ENCODE measurements at regions of chr19 and their contacts with region 1.

Region 1: DNA sequence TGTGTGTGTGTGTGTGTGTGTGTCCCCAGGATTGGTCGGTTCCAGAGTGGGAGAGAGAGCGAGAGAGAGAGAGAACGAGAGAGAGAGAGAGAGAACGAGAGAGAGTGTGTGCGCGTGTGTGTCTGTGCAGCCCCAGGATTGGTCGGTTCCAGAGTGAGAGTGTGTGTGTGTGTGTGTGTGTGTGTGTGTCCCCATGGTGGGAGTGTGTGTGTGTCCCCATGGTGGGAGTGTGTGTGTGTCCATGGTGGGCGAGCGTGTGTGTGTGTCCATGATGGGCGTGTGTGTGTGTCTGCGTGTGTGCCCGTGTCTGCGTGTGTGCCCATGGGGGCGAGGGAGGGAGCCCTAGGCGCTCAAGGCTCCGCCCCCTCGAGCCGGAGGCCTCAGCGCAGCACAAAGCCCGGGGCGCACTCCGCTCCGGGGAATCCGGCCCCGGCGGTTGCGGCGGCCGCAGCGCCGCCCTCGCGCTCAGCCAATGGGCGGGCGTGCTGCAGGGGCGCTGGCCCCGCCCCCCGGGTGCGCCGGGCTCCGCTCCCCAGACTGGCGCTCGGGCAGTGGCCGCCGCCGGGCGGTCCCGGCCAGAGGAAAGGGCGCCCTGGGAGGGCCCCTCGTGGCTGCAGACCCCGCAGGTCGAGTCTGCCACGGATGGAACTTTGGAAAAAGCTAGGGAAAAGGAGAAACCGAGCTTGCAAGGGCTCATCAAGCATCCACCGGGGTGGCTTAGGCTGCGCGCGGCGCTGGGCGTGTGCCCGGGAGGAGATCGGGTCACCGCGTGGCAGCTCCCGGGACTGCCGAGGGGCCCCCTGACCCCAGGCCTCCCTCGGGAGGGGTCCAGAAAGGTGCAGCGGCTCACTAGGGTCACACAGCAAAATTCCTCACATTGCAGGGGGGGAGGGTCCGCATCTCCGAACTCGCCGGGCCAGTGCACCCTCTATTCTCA is 96.2 kb downstream of the INSR start:
- DNase-seq: peak; percentile 91 to 95 (median 95)
- ATAC-seq: peak; percentile 90
- H3K4me3 ChIP-seq: peak overlapping the region; percentile 51
- H3K4me1 ChIP-seq: peaks cover 30% of the 10 kb centered on the region
- CTCF ChIP-seq: no peak

Region 2: DNA sequence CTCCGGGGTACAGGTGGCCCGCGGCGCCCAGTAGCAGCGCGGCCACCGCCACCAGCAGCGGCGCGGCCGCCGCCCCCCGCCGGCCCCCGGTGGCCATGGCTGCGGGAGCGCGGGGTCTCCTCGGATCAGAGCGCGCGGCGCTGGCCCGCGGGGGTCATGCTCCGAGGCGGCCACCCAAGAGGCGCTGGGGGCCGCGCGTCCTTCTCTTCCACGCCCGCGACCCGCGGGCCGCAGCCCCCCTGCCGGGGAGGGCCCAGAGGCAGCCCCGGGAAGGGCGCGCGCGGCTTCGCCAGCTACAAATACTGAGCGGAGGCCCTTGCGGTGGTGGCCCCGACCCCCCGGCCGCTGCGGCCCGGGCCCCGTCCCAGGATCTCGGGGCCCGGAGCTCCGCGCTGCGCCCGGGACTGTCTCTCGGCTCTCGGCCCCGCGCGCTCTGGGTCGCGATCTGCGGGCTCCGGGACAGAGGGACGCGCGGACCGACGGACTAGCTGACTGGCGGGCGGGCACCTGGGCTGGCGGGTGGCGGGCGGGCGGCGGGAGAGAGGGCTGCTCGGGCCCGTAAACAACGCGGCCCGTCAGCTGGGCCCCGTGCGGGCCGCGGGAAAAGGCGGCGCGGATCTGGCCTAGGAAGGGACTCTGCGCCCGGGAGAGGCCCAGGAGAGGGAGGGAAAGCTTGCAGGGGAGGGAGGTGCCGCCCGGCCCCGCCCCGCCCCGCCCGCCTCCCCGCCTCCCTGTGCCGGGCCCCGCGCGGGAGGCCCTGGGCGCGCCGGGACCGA is 96.0 kb after region 1 on chr19 and contains the start of gene INSR:
- intact Hi-C with region 1: loop called in 1 of 2 experiments (anchors 10 kb)
- DNase-seq: peak; percentile 91 to 97 (median 93)
- ATAC-seq: peak; percentile 94
- H3K4me3 ChIP-seq: peak within 1 kb of the TSS; percentile 96
- H3K4me1 ChIP-seq: peaks cover 11% of the 10 kb centered on the region
- CTCF ChIP-seq: no peak
- total RNA-seq, gene INSR: 74.9 to 109 (median 91.2) TPM